ENCODE measurements at regions of chr5 and their contacts with region 1.

Region 1: DNA sequence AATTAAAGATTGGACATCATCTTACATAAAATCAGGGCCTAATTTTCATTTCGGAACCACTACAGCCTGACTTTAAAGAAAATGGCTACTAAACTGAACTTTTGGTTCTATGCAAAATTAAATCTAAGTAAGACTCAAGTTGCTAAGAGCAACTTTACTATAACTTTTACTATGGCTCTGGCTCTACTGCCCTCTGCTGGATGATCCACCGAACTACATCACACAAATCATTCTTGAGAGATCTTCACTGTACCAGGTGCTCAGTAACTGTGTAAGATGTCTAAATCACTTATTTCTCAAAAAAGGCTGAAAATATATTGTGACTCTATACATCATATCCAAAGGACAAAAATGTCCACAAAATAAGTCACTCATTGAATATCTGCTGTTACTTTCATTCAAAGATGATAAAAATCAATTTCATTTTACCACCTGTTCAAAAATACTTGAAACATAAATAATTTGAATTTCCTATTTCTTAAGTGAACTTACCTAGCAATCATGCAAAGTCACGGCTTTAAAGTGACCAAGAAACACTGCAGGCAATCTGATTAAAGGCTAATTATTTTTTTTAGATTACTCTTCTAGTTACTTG is 13.5 kb downstream of the MOCS2 start:
- DNase-seq: peak in 3 of 6 donors; percentile 18 to 68 (median 38)
- ATAC-seq: peak; percentile 56 to 96 (median 89)
- H3K4me3 ChIP-seq: no peak overlapping the region
- H3K27ac ChIP-seq: no peak overlapping the region
- H3K4me1 ChIP-seq: no peaks in the 10 kb centered on the region
- H3K27me3 ChIP-seq: no peaks in the 10 kb centered on the region
- CTCF ChIP-seq: peak; percentile 76 to 84 (median 82)

Region 2: GRCh38 chr5:52725065-52725746 is 370.8 kb before region 1 on chr5:
- intact Hi-C with region 1: no loop called
- DNase-seq: peak in 2 of 6 donors; percentile 13 to 16
- ATAC-seq: peak; percentile 48 to 89 (median 81)
- H3K4me3 ChIP-seq: no peak overlapping the region
- H3K27ac ChIP-seq: peak overlapping the region in 2 of 4 donors; percentile 8 to 48
- H3K4me1 ChIP-seq: peaks cover 3 to 11% (median 3%) of the 10 kb centered on the region in 3 donors
- H3K27me3 ChIP-seq: no peaks in the 10 kb centered on the region
- CTCF ChIP-seq: no peak

Region 3: DNA sequence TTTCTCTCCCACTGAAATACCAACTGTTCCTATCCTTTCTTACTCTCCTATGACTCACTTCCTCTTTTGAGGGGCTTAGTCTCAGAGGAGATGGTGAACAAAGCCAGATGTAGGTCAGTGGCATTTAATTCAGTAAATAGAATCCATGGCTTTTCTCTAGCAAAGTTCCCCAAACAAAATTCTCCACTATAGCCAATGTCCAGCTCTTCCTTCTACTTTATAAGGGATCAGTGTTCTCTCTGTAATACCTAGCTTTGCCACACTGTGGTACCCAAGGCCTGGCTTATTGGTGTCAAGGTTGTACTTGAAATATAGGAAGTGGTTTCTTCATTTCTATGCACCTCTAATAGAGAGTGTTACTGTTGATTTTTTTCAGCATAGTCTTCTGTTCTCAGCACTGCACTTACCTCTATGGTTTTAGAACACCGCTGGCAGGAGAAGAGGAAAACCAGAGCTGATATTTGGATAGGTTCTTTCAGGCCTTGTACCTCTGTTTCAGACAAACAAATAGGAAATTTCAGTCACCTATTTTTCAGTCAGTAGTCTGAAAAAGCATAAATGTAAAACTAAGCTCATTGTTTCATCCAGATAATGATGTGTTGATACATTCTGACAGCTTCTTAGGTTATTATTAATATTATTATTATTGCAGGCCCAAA is 147.5 kb before region 1 on chr5:
- intact Hi-C with region 1: loop called in 1 of 3 experiments (anchors 5 kb)
- DNase-seq: peak in 4 of 6 donors; percentile 34 to 72 (median 40)
- ATAC-seq: peak; percentile 86 to 100 (median 98)
- H3K4me3 ChIP-seq: no peak overlapping the region
- H3K27ac ChIP-seq: no peak overlapping the region
- H3K4me1 ChIP-seq: peaks cover 0 to 6% (median 0%) of the 10 kb centered on the region in 3 donors
- H3K27me3 ChIP-seq: no peaks in the 10 kb centered on the region
- CTCF ChIP-seq: peak; percentile 33 to 66 (median 62)

Region 4: DNA sequence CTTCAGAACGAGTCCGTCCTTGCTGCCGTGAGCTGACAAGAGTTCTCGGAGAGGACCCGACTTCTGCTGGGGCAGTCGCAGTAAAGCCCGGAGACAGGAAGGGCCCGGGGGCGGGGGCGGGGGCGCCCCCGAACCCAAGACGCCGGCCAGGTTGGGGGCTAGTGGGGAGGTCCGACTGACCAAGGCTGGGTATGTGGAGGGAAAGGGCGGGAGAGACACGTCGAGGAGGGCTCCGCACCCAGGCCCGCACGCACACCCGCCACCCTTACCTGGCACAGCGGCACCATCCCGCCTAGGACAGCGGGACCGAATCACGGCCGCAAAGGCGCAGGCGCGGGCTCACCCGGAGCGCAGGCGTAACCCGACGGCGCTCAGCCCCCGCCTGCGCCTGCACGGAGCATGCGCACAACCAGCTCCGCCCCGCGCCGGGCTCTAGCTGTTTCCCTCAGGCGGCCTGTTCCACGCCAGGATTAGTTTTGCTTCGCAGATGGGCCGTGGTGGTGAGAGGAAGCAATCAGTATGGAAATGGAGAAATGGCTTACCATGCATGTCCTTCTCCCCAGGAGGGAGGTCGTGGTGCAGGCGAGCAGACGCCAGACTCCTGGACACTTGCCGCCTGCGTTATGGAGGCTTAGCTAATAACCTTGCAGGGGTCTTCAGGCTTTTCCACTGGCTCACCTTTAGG is 13.6 kb after region 1 on chr5 and contains the start of gene MOCS2:
- intact Hi-C with region 1: no loop called
- DNase-seq: peak; percentile 89 to 98 (median 94)
- ATAC-seq: peak; percentile 97 to 100 (median 100)
- H3K4me3 ChIP-seq: peak within 1 kb of the TSS; percentile 52 to 77 (median 64)
- H3K27ac ChIP-seq: peak within 1 kb of the TSS; percentile 19 to 86 (median 68)
- H3K4me1 ChIP-seq: peaks cover 6% of the 10 kb centered on the region in 3 donors
- H3K27me3 ChIP-seq: no peaks in the 10 kb centered on the region
- CTCF ChIP-seq: no peak
- total RNA-seq, gene MOCS2: 11.4 to 20.5 (median 15.4) TPM

Region 5: GRCh38 chr5:53239301-53239990 is 143.4 kb after region 1 on chr5:
- intact Hi-C with region 1: no loop called
- DNase-seq: no peak
- ATAC-seq: no peak
- H3K4me3 ChIP-seq: no peak overlapping the region
- H3K27ac ChIP-seq: no peak overlapping the region
- H3K4me1 ChIP-seq: no peaks in the 10 kb centered on the region
- H3K27me3 ChIP-seq: no peaks in the 10 kb centered on the region
- CTCF ChIP-seq: no peak

Measured in pancreas (tissue), 10 donors.